ENCODE measurements at regions of chr7 and their contacts with region 1.

Region 1: DNA sequence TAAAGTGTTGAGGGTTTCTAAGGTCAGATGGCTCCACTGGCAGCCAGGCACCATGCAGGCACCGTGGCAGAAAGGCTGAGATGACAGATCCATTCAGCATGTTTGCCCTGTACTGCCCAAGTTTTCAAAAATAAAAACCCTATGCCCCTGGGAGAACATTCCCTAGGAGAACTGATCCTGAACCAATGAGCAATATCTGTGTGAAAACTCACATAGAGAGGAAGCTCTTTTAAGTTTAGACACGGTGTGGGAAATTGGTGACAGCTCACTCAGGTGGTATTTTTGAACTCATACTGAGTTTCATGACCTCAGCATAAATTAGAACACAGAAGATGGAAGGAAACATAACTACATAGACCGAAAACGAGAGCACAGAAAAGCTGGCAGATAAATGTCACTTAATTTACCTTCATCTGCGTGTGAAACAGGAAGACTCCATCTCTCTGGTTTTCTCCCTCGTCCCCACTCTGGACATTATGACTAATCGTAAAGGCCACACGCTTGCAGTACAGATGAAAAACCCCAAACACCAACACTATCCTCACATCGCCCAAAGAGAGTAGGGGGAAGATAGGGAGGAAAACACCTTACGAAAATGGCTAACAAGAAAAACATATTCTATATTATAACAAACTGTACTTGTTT is 127.8 kb downstream of the ICA1 start:
- DNase-seq: no peak
- ATAC-seq: peak; percentile 45
- H3K4me3 Mint-ChIP-seq: peak overlapping the region; percentile 51
- H3K27ac Mint-ChIP-seq: peak overlapping the region; percentile 82
- H3K4me1 Mint-ChIP-seq: peaks cover 33% of the 10 kb centered on the region
- H3K27me3 Mint-ChIP-seq: no peaks in the 10 kb centered on the region

Region 2: GRCh38 chr7:8176370-8177081 is 42.3 kb after region 1 on chr7:
- POLR2A ChIA-PET with region 1: interaction called, 14 read pairs
- DNase-seq: no peak
- ATAC-seq: peak; percentile 97
- H3K4me3 Mint-ChIP-seq: peak overlapping the region; percentile 68
- H3K27ac Mint-ChIP-seq: peak overlapping the region; percentile 98
- H3K4me1 Mint-ChIP-seq: peaks cover 43% of the 10 kb centered on the region
- H3K27me3 Mint-ChIP-seq: no peaks in the 10 kb centered on the region

Measured in activated naive CD8-positive, alpha-beta T cell treated with anti-CD3 and anti-CD28 coated beads, Interleukin-2, amount 10 ng/mL, durations not matched to agents 7 days and 5 days (primary cell).